ENCODE measurements at regions of chr1 and their contacts with region 1.

Region 1: DNA sequence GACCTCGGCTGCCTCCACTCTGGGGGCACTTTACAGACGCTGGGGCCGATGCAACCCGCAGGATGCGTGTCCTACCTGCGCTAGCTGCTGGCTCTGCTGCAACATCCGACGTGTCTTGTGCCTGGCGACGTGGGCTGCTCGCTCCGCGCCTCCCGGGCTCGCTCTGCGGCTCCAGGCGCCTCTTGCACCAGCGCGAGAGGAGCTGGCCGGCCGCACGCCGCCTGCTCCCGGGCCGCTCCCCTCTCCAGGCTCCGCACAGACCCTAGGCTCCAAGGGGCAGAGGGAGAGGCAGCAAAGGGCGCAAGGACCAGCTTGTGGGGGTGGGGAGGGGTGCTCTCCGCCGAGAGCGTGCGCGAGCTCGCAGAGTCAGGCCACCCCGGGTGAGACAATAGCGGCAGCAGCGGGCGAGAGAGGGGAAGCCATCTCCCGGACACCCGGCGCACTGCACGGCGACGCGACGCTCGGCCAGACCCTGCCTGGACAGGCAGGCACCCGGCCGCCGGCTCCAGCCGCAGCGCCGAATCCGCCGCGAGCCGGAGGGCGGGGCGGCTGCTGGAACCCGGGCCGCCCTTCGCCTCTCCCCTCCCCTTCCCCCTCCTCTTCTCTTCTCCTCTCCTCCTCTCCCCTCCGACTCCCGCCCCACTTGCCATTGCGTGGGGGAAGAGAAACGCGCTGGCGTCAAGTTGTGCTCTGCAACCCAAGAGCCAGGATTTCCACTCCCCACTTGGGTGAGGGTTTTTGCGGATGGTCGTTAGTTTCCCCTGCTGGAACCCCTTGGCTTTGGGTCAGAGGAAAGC is at the start of gene PIK3C2B:
- DNase-seq: no peak
- H3K4me3 ChIP-seq: peak within 1 kb of the TSS; percentile 62 to 94
- H3K27ac ChIP-seq: peak within 1 kb of the TSS; percentile 86
- H3K4me1 ChIP-seq: peaks cover 27% of the 10 kb centered on the region
- H3K27me3 ChIP-seq: no peaks in the 10 kb centered on the region
- CTCF ChIP-seq: peak in 1 of 3 experiments; percentile 41
- POLR2A ChIP-seq: peak in 1 of 2 donors; percentile 9
- total RNA-seq, gene PIK3C2B: 52.1 TPM

Region 2: GRCh38 chr1:204162231-204163074 is 332.0 kb before region 1 on chr1:
- intact Hi-C with region 1: loop called (anchors 10 kb)
- DNase-seq: no peak
- H3K4me3 ChIP-seq: no peak overlapping the region
- H3K27ac ChIP-seq: no peak overlapping the region
- H3K4me1 ChIP-seq: no peaks in the 10 kb centered on the region
- H3K27me3 ChIP-seq: no peaks in the 10 kb centered on the region
- CTCF ChIP-seq: peak; percentile 94 to 99 (median 97)
- POLR2A ChIP-seq: no peak

Region 3: DNA sequence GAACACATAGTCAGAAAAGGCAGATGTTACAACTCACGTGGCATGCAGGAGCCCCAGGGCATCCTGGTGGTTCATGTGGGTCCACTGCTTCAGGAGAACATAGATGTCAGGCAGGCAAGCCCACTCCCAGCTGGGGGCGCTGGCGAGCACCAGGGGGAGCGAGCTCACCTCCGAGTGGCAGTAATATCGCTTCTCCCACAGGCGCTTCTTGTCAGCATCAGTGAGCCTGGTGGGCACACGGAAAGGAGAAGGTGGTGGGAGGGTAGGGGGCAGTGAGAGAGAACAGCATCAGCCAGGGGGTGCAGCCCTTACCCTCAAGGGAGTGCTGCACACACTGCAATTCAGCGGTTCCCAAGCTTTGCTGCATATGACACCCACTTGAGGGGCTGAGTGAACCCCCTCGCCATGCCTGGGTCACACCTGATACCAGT is 48.5 kb before region 1 on chr1:
- intact Hi-C with region 1: loop called (anchors 2 kb)
- DNase-seq: no peak
- H3K4me3 ChIP-seq: no peak overlapping the region
- H3K27ac ChIP-seq: no peak overlapping the region
- H3K4me1 ChIP-seq: peaks cover 56% of the 10 kb centered on the region
- H3K27me3 ChIP-seq: no peaks in the 10 kb centered on the region
- CTCF ChIP-seq: no peak
- POLR2A ChIP-seq: no peak

Region 4: DNA sequence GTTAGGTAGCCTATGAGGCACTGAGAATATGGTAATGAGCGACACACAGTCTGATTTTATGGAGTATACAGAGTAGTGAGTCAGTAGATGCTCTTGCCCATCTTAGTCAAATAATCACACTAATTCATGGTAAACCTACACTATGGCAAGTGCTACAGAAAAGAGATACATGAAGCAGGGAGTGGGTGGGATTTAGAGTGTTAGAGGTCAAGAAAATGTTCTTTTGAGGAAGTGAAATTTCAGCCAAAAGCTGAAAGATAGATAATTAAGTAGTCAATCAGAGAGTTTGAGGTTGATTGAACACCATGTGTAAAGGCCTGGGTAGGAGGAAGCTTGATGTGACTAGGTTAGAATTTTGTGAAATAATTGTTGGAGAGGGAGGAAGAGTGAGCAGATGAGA is 36.5 kb after region 1 on chr1:
- intact Hi-C with region 1: no loop called
- DNase-seq: no peak
- H3K4me3 ChIP-seq: no peak overlapping the region
- H3K27ac ChIP-seq: no peak overlapping the region
- H3K4me1 ChIP-seq: no peaks in the 10 kb centered on the region
- H3K27me3 ChIP-seq: no peaks in the 10 kb centered on the region
- CTCF ChIP-seq: no peak
- POLR2A ChIP-seq: no peak

Region 5: DNA sequence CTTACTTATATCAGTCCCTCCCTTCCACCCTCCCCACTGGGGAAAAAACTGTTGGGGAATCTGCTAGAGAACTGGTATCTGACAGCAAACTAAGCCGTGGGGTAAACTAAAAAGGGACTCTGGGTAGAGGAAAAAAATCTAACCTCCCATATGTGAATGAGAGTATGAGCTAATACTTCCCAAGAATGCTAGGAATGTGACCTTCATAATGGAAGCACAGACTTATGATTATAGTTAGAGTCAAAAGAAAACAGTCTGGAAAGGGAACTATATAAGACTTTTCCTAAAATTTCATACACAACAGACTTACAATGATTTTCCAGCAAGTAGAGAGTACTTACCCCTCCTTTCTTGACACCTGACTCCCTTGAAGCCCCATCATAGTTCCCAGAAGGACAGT is 650.3 kb after region 1 on chr1:
- intact Hi-C with region 1: no loop called
- DNase-seq: no peak
- H3K4me3 ChIP-seq: no peak overlapping the region
- H3K27ac ChIP-seq: no peak overlapping the region
- H3K4me1 ChIP-seq: peaks cover 8% of the 10 kb centered on the region
- H3K27me3 ChIP-seq: no peaks in the 10 kb centered on the region
- CTCF ChIP-seq: no peak
- POLR2A ChIP-seq: no peak